ENCODE measurements at regions of chr1 and their contacts with region 1.

Region 1: DNA sequence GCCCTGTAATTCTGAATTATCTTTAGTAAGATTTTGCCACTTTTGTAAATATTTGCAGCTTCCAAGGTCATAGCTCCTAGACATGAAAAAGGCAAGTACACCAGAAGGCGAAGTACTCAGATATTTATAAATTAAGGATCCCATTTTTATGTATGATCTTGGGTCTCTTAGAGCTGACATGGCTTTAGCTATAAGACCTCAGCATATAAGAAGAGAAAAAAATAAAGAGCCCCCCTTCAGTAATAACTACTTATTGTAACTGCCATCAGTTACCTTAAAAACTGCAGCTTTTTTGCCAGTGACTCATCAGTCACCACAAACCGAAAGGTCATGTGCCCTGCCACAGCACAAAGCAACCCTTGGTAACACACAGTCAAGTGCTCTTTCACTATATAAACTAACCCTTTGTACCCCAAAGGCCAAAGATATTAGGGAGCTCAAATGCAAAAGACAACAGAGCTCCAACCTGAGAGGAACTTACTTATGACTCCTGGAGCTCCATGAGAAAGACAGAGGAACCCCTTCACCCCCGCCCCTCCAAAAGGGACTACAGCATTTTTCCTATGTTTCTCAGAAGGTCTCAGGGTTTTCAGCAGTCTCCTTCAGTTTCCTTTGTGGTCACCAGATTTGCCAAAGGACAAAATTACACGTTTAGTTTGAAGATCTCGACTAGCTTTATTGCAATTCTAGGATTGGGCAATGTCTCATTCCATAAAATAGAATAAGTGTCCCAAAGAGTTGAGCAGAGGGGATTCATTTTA is 219.8 kb upstream of the DUSP10 start:
- DNase-seq: peak; percentile 55
- ATAC-seq: peak; percentile 96
- H3K4me3 ChIP-seq: no peak overlapping the region
- H3K27ac ChIP-seq: no peak overlapping the region
- H3K4me1 ChIP-seq: no peaks in the 10 kb centered on the region; the same call in 1 of the 2 replicates
- H3K27me3 ChIP-seq: no peaks in the 10 kb centered on the region
- CTCF ChIP-seq: no peak
- EP300 ChIP-seq: peak; percentile 26 to 44; a peak in 2 of 4 replicates
- POLR2A ChIP-seq: no peak
- RAD21 ChIP-seq: no peak

Region 2: GRCh38 chr1:221902961-221903360 is 58.8 kb before region 1 on chr1:
- CTCF ChIA-PET with region 1: no interaction called
- POLR2A ChIA-PET with region 1: no interaction called
- RAD21 ChIA-PET with region 1: no interaction called
- SMC1A ChIA-PET with region 1: no interaction called
- in situ Hi-C with region 1: no loop called
- intact Hi-C with region 1: no loop called
- DNase-seq: no peak
- ATAC-seq: no peak
- H3K4me3 ChIP-seq: no peak overlapping the region
- H3K27ac ChIP-seq: no peak overlapping the region
- H3K4me1 ChIP-seq: no peaks in the 10 kb centered on the region
- H3K27me3 ChIP-seq: no peaks in the 10 kb centered on the region
- CTCF ChIP-seq: no peak
- EP300 ChIP-seq: no peak
- POLR2A ChIP-seq: no peak
- RAD21 ChIP-seq: no peak

Region 3: GRCh38 chr1:221939607-221940006 is 22.1 kb before region 1 on chr1:
- CTCF ChIA-PET with region 1: interaction called, 3 read pairs
- POLR2A ChIA-PET with region 1: no interaction called
- RAD21 ChIA-PET with region 1: interaction called, 7 read pairs
- SMC1A ChIA-PET with region 1: interaction called, 15 read pairs
- in situ Hi-C with region 1: no loop called
- intact Hi-C with region 1: no loop called
- DNase-seq: peak; percentile 84
- ATAC-seq: peak; percentile 90
- H3K4me3 ChIP-seq: no peak overlapping the region
- H3K27ac ChIP-seq: no peak overlapping the region; the same call in 1 of the 2 replicates
- H3K4me1 ChIP-seq: peaks cover 19% of the 10 kb centered on the region
- H3K27me3 ChIP-seq: no peaks in the 10 kb centered on the region
- CTCF ChIP-seq: no peak
- EP300 ChIP-seq: peak in 1 of 2 experiments; percentile 56; a peak in 1 of 4 replicates
- POLR2A ChIP-seq: no peak
- RAD21 ChIP-seq: no peak

Region 4: DNA sequence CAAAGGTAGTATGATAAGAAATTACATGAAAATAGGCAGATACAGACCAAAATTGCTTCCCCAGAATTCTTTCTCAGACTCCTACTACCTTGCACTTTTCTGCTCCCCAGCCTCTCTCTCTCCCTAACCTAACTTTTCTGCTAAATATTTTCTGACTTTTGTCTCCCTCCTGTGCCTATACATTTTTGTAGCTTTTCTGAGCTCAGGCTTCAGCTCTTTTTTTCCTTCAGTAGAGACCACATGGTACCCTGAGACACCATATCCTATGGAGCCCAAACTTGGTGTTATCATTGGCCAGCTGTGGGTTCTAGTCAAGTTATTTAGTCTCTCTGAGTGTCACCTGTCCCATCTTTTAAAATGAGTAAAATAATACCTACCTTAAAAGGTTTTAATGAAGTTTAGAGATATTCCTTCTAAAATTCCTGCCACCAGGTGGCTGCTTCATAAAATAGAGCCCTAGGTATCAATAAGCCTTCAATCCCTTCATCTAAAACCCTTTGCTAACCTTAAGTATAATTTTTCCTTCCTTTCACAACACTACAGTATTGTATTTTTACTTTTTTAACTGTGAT is 17.8 kb after region 1 on chr1:
- CTCF ChIA-PET with region 1: interaction called, 3 read pairs
- POLR2A ChIA-PET with region 1: no interaction called
- RAD21 ChIA-PET with region 1: interaction called, 5 read pairs
- SMC1A ChIA-PET with region 1: interaction called, 15 read pairs
- in situ Hi-C with region 1: no loop called
- intact Hi-C with region 1: no loop called
- DNase-seq: no peak
- ATAC-seq: peak; percentile 48
- H3K4me3 ChIP-seq: no peak overlapping the region
- H3K27ac ChIP-seq: no peak overlapping the region
- H3K4me1 ChIP-seq: no peaks in the 10 kb centered on the region
- H3K27me3 ChIP-seq: no peaks in the 10 kb centered on the region
- CTCF ChIP-seq: no peak; a peak in 1 of 6 replicates
- EP300 ChIP-seq: no peak
- POLR2A ChIP-seq: no peak
- RAD21 ChIP-seq: peak; percentile 49

Region 5: DNA sequence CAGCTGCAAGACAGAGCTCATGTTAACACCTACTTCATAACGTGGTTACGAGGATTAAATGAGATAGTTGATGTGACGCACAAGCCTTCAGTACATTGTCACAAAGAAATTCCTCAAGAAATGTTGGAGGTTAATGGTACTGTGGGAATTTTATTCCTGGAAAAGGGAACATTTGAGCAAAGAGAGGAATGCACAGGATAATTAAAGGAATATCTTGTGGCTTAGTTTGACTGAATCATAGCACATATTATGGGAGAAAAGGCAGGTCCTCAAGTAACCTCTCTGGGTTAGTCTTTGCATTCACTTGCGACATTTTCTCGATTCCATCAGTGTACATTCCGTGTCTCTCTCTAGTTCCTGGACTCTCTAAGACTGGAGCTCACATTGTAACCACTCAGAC is 80.4 kb after region 1 on chr1:
- CTCF ChIA-PET with region 1: no interaction called
- POLR2A ChIA-PET with region 1: no interaction called
- RAD21 ChIA-PET with region 1: no interaction called
- SMC1A ChIA-PET with region 1: no interaction called
- in situ Hi-C with region 1: no loop called
- intact Hi-C with region 1: no loop called
- DNase-seq: no peak
- ATAC-seq: no peak
- H3K4me3 ChIP-seq: no peak overlapping the region
- H3K27ac ChIP-seq: no peak overlapping the region
- H3K4me1 ChIP-seq: no peaks in the 10 kb centered on the region
- H3K27me3 ChIP-seq: no peaks in the 10 kb centered on the region
- CTCF ChIP-seq: no peak
- EP300 ChIP-seq: no peak
- POLR2A ChIP-seq: no peak
- RAD21 ChIP-seq: no peak

Region 6: GRCh38 chr1:222579316-222579715 is 617.6 kb after region 1 on chr1:
- CTCF ChIA-PET with region 1: no interaction called
- POLR2A ChIA-PET with region 1: no interaction called
- RAD21 ChIA-PET with region 1: no interaction called
- SMC1A ChIA-PET with region 1: no interaction called
- in situ Hi-C with region 1: no loop called
- intact Hi-C with region 1: no loop called
- DNase-seq: no peak
- ATAC-seq: no peak
- H3K4me3 ChIP-seq: no peak overlapping the region
- H3K27ac ChIP-seq: no peak overlapping the region
- H3K4me1 ChIP-seq: peaks cover 24% of the 10 kb centered on the region
- H3K27me3 ChIP-seq: no peaks in the 10 kb centered on the region
- CTCF ChIP-seq: no peak
- EP300 ChIP-seq: no peak
- POLR2A ChIP-seq: no peak
- RAD21 ChIP-seq: no peak

Measured in GM12878 (cell line).